ENCODE measurements at regions of chr5 and their contacts with region 1.

Region 1: GRCh38 chr5:140073296-140073695 is 30.2 kb upstream of the NRG2 start:
- DNase-seq: peak in 3 of 4 experiments; percentile 12 to 28 (median 18)
- ATAC-seq: no peak
- H3K4me3 ChIP-seq: no peak overlapping the region
- H3K27ac ChIP-seq: no peak overlapping the region
- H3K4me1 ChIP-seq: no peaks in the 10 kb centered on the region
- H3K27me3 ChIP-seq: no peaks in the 10 kb centered on the region
- CTCF ChIP-seq: peak in 2 of 3 experiments; percentile 43 to 71; a peak in 3 of 6 replicates
- EP300 ChIP-seq: no peak
- POLR2A ChIP-seq: no peak
- RAD21 ChIP-seq: peak; percentile 81 to 86

Region 2: GRCh38 chr5:140145818-140146522 is 72.7 kb after region 1 on chr5:
- CTCF ChIA-PET with region 1: interaction called, 59 read pairs
- POLR2A ChIA-PET with region 1: interaction called, 3 read pairs
- in situ Hi-C with region 1: no loop called
- intact Hi-C with region 1: loop called (anchors 1 kb)
- DNase-seq: peak; percentile 70 to 80 (median 76)
- ATAC-seq: peak; percentile 94
- H3K4me3 ChIP-seq: no peak overlapping the region
- H3K27ac ChIP-seq: no peak overlapping the region
- H3K4me1 ChIP-seq: peaks cover 2 to 12% of the 10 kb centered on the region in 2 experiments; a peak in 3 of 5 replicates
- H3K27me3 ChIP-seq: peaks cover 0 to 19% of the 10 kb centered on the region in 2 experiments; a peak in 2 of 5 replicates
- CTCF ChIP-seq: peak; percentile 62 to 85 (median 69)
- EP300 ChIP-seq: no peak
- POLR2A ChIP-seq: no peak
- RAD21 ChIP-seq: peak; percentile 58 to 69

Region 3: DNA sequence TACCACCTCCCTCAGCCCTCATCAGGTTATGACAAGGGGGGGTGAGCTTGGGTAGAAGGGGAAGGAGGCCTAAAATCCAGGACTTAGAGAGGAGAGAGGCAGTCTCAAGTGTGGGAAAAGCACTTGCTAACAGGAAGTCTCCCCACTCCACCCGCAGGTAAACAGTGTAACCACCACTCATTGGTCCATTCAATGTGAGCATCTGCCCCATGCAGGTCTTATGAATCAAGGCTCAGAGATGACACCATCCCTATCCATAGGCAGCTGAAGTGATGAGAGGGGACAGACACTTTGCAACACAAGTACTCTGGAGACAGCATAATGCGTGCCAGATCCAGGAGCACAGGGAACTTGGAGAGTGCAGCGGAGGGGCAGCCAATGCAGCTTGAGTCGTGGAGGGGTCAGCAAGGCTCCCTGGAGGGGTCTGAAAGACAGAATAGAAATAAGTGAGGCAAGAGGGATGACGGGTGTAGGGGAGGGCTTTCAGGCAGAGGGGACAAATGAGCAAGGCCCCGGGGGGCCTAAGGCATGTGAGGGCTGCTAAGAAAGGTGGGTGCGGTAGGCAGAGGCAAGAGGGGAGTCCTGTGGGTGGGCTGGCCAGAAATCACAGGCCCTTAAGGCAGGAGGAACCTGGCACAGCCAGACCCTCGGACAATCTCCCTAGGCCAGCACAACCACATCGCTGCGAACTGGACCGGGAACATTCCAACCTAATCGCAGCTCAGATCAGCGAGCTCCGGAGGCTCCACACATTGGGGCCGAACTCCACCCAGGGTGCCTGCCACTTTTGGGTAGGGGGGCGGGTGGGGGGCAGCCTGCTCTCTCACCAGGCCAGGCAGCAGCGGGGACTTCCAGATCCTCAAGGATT is 78.7 kb after region 1 on chr5:
- CTCF ChIA-PET with region 1: interaction called, 73 read pairs
- POLR2A ChIA-PET with region 1: interaction called, 5 read pairs
- in situ Hi-C with region 1: no loop called
- intact Hi-C with region 1: loop called (anchors 1 kb)
- DNase-seq: no peak
- ATAC-seq: no peak
- H3K4me3 ChIP-seq: no peak overlapping the region
- H3K27ac ChIP-seq: no peak overlapping the region
- H3K4me1 ChIP-seq: peaks cover 0 to 7% of the 10 kb centered on the region in 2 experiments; a peak in 2 of 5 replicates
- H3K27me3 ChIP-seq: peaks cover 0 to 10% of the 10 kb centered on the region in 2 experiments; a peak in 2 of 5 replicates
- CTCF ChIP-seq: no peak
- EP300 ChIP-seq: no peak
- POLR2A ChIP-seq: no peak
- RAD21 ChIP-seq: no peak

Region 4: DNA sequence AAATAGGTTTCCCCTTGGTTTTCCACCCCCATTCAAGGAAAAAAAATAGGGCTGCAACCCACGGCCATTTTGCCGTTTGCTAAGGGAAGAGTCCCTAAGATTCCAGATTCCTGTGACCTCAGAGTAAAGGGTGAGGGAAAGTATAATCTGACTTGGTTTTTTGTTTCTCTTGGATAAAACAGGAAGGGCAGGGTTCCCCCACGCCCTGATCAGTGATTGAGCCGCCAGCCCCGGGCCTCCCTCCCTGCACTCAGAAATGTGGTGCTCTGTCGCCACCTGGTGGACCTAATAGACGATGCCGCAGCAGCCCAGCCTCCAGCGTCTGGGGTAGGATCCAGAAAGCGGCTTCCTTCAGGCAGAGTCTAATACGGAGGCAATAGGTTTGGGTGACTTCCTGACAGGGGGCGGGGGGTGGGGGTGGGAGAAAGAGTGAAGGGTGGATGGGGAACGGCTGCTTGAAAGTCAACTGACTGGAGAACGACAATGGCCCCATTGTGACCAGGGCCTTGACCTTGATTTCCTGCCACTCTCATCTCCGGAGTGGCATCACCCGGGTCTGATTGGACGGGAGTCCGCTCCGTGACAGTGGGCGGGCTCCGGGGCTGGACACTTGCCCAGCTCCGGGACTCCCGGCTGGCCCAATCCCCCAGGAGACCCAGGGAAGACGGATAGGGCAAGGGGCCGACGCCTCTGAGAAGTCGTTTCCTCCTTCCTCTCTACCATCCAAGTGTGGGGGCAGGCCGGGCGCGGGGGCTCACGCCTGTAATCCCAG is 83.9 kb after region 1 on chr5:
- CTCF ChIA-PET with region 1: interaction called, 73 read pairs
- POLR2A ChIA-PET with region 1: interaction called, 3 read pairs
- in situ Hi-C with region 1: no loop called
- intact Hi-C with region 1: loop called (anchors 1 kb)
- DNase-seq: peak; percentile 90
- ATAC-seq: peak; percentile 97
- H3K4me3 ChIP-seq: no peak overlapping the region
- H3K27ac ChIP-seq: no peak overlapping the region
- H3K4me1 ChIP-seq: peaks cover 0 to 10% of the 10 kb centered on the region in 2 experiments; a peak in 2 of 5 replicates
- H3K27me3 ChIP-seq: peaks cover 0 to 4% of the 10 kb centered on the region in 2 experiments; a peak in 1 of 5 replicates
- CTCF ChIP-seq: peak; percentile 88 to 95 (median 94)
- EP300 ChIP-seq: no peak
- POLR2A ChIP-seq: no peak
- RAD21 ChIP-seq: peak; percentile 93 to 96

Region 5: DNA sequence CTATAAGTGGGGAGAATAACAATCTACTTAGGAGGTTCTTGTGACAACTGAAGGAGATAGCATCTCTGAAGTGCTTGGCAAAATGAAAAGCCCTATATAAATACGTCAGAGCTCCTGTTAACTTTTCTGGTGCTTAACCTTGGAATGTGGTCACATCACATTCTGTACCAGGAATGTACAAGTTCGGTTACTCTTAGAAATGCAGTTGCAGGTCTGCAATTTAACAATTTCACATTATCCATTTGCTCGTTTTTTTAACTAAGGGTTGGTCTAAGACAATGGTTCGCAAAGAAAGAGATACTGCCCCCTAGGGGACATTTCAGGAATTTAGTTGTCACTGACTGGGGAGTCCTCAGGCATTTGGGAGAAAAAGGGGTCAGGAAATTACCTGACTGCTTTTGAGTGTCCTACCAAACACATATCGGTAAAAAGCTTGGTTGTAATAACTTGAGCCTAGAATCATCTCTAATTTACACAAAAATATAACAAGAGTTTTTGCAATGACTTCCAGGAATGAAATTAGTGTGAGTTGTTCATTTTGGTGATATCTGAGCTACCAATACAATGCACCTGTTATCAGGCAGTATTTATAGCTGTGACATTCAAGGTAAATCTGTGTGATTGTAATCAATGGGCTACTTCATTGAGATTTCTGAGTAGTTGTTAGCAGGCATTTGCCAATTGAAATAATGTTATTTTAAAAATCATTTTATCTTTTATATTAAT is 278.5 kb after region 1 on chr5:
- CTCF ChIA-PET with region 1: interaction called, 4 read pairs
- POLR2A ChIA-PET with region 1: no interaction called
- in situ Hi-C with region 1: no loop called
- intact Hi-C with region 1: loop called (anchors 2 kb)
- DNase-seq: peak; percentile 68 to 84 (median 69)
- ATAC-seq: peak; percentile 85
- H3K4me3 ChIP-seq: no peak overlapping the region
- H3K27ac ChIP-seq: no peak overlapping the region
- H3K4me1 ChIP-seq: peaks cover 0 to 13% of the 10 kb centered on the region in 2 experiments; a peak in 3 of 5 replicates
- H3K27me3 ChIP-seq: no peaks in the 10 kb centered on the region
- CTCF ChIP-seq: peak; percentile 75 to 88 (median 80)
- EP300 ChIP-seq: no peak
- POLR2A ChIP-seq: no peak
- RAD21 ChIP-seq: peak; percentile 77 to 79

Measured in K562 (cell line).